Natural killer cell (primary cell): ENCODE measurements at regions of chr7 and their contacts with region 1.

Region 1: DNA sequence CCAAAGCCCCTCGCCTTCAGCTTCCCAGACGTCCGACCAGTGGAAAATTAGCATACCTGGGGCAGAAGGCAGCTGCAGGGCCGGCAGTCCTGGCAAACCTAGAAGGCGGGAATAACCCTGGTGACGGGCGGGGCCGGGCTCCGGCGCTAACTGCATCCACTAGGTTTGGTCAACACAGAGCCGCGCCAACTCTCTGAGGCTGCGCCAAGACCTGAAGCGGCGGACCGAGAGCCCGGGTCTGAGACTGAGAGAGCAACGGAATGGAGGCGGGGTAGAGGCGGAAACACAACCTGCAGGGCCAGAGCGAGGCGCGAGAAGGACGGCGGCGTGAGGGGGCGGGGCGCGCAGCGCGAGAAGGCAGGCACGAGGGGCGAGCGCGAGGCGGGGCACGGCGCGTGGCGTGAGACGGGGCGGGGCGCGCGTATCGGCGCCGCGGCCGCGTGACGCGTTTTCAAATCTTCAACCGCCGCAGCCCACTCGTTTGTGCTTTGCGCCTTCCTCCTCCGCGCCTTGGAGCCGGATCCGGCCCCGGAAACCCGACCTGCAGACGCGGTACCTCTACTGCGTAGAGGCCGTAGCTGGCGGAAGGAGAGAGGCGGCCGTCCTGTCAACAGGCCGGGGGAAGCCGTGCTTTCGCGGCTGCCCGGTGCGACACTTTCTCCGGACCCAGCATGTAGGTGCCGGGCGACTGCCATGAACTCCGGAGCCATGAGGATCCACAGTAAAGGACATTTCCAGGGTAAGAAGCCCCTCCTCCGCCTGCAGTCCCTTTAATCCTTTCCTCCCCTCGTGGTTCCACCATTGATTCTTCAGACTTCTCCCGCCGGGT is at the starts of genes DBF4 and SLC25A40:
- DNase-seq: peak; percentile 95 to 97
- ATAC-seq: peak; percentile 88 to 97 (median 90)
- H3K4me3 ChIP-seq: peak within 1 kb of the TSS; percentile 94
- H3K4me3 Mint-ChIP-seq: peak within 1 kb of the TSS; percentile 97
- H3K27ac ChIP-seq: peak within 1 kb of the TSS; percentile 88
- H3K27ac Mint-ChIP-seq: peak within 1 kb of the TSS; percentile 94 to 98
- H3K4me1 ChIP-seq: no peaks in the 10 kb centered on the region
- H3K4me1 Mint-ChIP-seq: peaks cover 24 to 42% of the 10 kb centered on the region in 2 donors
- H3K27me3 ChIP-seq: no peaks in the 10 kb centered on the region
- H3K27me3 Mint-ChIP-seq: no peaks in the 10 kb centered on the region
- CTCF ChIP-seq: no peak
- total RNA-seq, gene DBF4: 51.7 to 61.2 (median 54.0) TPM
- total RNA-seq, gene SLC25A40: 17.4 to 26.0 (median 22.6) TPM

Region 2: DNA sequence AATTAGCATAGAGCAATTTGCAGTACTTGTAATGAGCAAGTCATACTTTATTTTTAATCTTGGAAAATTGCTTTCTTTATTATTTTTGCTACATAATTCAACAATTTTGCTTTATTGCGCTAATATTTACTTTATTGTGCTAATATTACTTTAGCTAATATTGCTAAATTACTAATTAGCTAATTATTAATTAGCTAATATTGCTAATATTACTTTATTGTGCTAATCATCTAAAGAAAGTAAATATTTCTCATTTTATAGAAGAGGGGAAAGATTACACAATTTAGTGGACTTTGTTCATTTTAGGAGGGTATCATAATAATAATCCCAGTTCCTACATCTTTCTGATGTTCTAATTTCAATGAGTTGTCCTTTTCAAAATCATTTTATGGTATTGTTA is 186.9 kb before region 1 on chr7:
- intact Hi-C with region 1: no loop called
- DNase-seq: no peak
- ATAC-seq: no peak
- H3K4me3 ChIP-seq: no peak overlapping the region
- H3K4me3 Mint-ChIP-seq: no peak overlapping the region
- H3K27ac ChIP-seq: no peak overlapping the region
- H3K27ac Mint-ChIP-seq: no peak overlapping the region
- H3K4me1 ChIP-seq: no peaks in the 10 kb centered on the region
- H3K4me1 Mint-ChIP-seq: no peaks in the 10 kb centered on the region
- H3K27me3 ChIP-seq: no peaks in the 10 kb centered on the region
- H3K27me3 Mint-ChIP-seq: no peaks in the 10 kb centered on the region
- CTCF ChIP-seq: no peak

Region 3: DNA sequence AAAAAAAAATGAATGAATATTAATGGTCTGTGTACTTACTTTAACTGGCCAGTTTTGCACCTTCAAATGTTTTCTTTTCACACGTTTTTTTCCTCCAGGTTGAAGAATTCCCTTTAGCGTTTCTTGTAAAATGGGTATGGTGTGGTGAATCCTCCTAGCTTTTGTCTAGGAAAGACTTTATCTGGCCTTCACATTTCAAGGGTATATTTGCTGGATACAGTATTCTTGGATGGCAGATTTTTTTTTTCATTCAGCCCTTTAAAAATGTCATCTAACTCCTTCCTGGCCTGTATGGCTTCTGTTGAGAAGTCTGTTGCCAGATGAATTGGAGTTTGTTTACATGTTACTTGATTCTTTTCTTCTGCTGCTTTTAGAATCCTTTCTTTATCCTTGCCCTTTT is 10.2 kb before region 1 on chr7:
- intact Hi-C with region 1: no loop called
- DNase-seq: no peak
- ATAC-seq: no peak
- H3K4me3 ChIP-seq: no peak overlapping the region
- H3K4me3 Mint-ChIP-seq: no peak overlapping the region
- H3K27ac ChIP-seq: no peak overlapping the region
- H3K27ac Mint-ChIP-seq: no peak overlapping the region
- H3K4me1 ChIP-seq: no peaks in the 10 kb centered on the region
- H3K4me1 Mint-ChIP-seq: peaks cover 0 to 14% of the 10 kb centered on the region in 2 donors
- H3K27me3 ChIP-seq: no peaks in the 10 kb centered on the region
- H3K27me3 Mint-ChIP-seq: no peaks in the 10 kb centered on the region
- CTCF ChIP-seq: no peak

Region 4: DNA sequence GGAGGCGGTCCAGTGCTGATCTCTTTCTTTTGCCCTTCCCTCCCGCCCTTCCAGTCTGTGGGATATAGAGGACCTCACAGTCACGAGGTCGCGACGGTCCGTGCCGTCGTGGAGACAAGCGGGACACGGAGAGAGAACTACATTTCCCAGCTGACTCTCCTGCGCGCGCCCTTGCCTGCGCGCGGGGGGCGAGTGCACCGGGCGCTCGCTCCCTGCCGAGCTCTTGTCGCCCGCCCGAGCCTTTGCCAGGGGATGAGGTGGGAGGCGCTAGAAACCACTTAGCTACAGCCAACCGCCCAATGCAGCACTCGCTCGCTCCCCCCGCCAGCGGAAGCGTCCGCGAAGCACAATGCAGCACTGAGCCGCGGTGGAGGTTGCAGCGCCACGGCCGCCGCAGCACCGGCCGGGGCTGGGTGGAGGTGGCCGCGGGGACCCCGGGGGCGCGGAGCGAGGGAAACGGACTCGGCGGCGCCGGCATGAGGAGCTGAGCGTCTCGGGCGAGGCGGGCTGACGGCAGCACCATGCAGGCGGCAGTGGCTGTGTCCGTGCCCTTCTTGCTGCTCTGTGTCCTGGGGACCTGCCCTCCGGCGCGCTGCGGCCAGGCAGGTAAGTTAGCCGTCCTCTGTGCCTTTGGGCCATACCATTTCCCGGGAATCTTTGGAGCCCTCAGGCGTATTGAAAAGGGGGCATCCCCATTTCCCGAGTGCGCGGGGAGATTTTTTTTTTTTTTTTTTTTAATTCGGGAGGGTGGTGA is 57.9 kb after region 1 on chr7 and contains the start of gene ADAM22:
- intact Hi-C with region 1: loop called (anchors 2 kb)
- DNase-seq: peak; percentile 73 to 90
- ATAC-seq: peak; percentile 94 to 96 (median 95)
- H3K4me3 ChIP-seq: peak within 1 kb of the TSS; percentile 72
- H3K4me3 Mint-ChIP-seq: peak within 1 kb of the TSS; percentile 93
- H3K27ac ChIP-seq: peak within 1 kb of the TSS; percentile 18
- H3K27ac Mint-ChIP-seq: peak within 1 kb of the TSS; percentile 9 to 76
- H3K4me1 ChIP-seq: peaks cover 15% of the 10 kb centered on the region
- H3K4me1 Mint-ChIP-seq: peaks cover 14 to 22% of the 10 kb centered on the region in 2 donors
- H3K27me3 ChIP-seq: no peaks in the 10 kb centered on the region
- H3K27me3 Mint-ChIP-seq: peaks cover 10 to 12% of the 10 kb centered on the region in 2 donors
- CTCF ChIP-seq: no peak
- total RNA-seq, gene ADAM22: 3.0 to 5.4 (median 3.7) TPM

Region 5: DNA sequence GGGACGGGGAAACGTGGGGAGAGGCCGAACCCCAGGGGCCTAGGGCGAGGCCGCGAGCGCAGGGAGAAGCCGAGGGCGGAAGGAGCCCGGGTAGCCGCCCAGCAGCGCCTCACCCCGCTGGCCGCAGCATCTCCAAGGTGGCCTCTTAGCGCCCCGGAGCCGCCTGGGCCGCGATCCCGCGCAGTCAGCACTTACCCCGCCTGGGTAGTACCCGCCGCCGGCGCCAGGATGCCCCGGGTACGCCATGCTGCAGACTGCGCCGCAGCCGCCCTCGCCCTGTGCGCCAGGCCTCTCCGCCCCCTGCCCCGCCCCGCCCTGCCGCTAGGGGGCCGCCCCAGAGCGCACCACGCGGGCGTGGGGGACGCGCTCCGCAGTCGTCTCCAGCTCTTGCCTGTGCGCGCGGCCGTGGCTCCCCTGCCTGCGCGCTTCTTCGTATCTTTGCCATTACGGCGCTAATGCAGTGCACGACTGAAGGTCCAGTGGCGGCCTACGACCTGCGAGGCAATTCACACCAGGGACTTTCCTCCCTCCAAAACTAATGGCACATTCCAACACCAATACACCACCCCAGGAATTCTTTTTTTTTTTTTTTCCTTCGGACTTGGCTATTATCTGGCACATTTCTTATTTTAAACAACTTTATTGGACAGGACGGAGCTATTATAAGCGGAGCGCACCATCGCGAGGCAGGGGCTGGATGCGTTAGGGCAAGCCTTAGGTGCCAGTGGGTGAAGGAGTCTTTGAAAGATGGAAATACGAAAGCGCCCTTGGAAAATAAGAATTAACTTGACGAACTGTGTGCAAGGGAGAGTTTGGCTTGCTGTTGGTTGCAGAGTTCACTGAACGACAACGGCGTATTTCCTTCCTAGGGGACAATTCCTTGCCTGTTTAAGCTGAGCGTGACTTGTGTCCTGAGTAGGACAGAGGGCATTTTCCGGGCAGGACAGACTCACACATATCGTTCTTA is 343.8 kb after region 1 on chr7 and contains the start of gene SRI:
- intact Hi-C with region 1: loop called (anchors 5 kb)
- DNase-seq: peak; percentile 93 to 94
- ATAC-seq: peak; percentile 90 to 98 (median 94)
- H3K4me3 ChIP-seq: peak within 1 kb of the TSS; percentile 88
- H3K4me3 Mint-ChIP-seq: peak within 1 kb of the TSS; percentile 95
- H3K27ac ChIP-seq: peak within 1 kb of the TSS; percentile 87
- H3K27ac Mint-ChIP-seq: peak within 1 kb of the TSS; percentile 90 to 91
- H3K4me1 ChIP-seq: peaks cover 9% of the 10 kb centered on the region
- H3K4me1 Mint-ChIP-seq: peaks cover 32 to 40% of the 10 kb centered on the region in 2 donors
- H3K27me3 ChIP-seq: no peaks in the 10 kb centered on the region
- H3K27me3 Mint-ChIP-seq: no peaks in the 10 kb centered on the region
- CTCF ChIP-seq: peak; percentile 97
- total RNA-seq, gene SRI: 67.9 to 75.0 (median 68.6) TPM